ENCODE measurements at regions of chr15 and their contacts with region 1.

Region 1: GRCh38 chr15:70036585-70037291 is 61.0 kb downstream of the TLE3 start:
- DNase-seq: peak; percentile 75
- ATAC-seq: peak; percentile 69
- H3K4me3 ChIP-seq: peak overlapping the region in 2 of 5 experiments; percentile 11 to 13
- H3K4me3 Mint-ChIP-seq: peak overlapping the region; percentile 75
- H3K27ac ChIP-seq: peak overlapping the region; percentile 70 to 78
- H3K27ac Mint-ChIP-seq: peak overlapping the region; percentile 91
- H3K4me1 ChIP-seq: peaks cover 39 to 48% of the 10 kb centered on the region in 2 donors
- H3K4me1 Mint-ChIP-seq: peaks cover 59% of the 10 kb centered on the region
- H3K27me3 ChIP-seq: no peaks in the 10 kb centered on the region
- H3K27me3 Mint-ChIP-seq: no peaks in the 10 kb centered on the region
- CTCF ChIP-seq: no peak

Region 2: GRCh38 chr15:69755551-69756310 is 281.0 kb before region 1 on chr15:
- CTCF ChIA-PET with region 1: interaction called, 7 read pairs
- POLR2A ChIA-PET with region 1: no interaction called
- intact Hi-C with region 1: loop called (anchors 1 kb)
- DNase-seq: peak; percentile 84
- ATAC-seq: peak; percentile 85
- H3K4me3 ChIP-seq: peak overlapping the region in 2 of 5 experiments; percentile 8 to 23
- H3K4me3 Mint-ChIP-seq: peak overlapping the region; percentile 84
- H3K27ac ChIP-seq: peak overlapping the region; percentile 22 to 73
- H3K27ac Mint-ChIP-seq: peak overlapping the region; percentile 91
- H3K4me1 ChIP-seq: peaks cover 69 to 72% of the 10 kb centered on the region in 2 donors
- H3K4me1 Mint-ChIP-seq: peaks cover 79% of the 10 kb centered on the region
- H3K27me3 ChIP-seq: no peaks in the 10 kb centered on the region
- H3K27me3 Mint-ChIP-seq: no peaks in the 10 kb centered on the region
- CTCF ChIP-seq: no peak

Region 3: DNA sequence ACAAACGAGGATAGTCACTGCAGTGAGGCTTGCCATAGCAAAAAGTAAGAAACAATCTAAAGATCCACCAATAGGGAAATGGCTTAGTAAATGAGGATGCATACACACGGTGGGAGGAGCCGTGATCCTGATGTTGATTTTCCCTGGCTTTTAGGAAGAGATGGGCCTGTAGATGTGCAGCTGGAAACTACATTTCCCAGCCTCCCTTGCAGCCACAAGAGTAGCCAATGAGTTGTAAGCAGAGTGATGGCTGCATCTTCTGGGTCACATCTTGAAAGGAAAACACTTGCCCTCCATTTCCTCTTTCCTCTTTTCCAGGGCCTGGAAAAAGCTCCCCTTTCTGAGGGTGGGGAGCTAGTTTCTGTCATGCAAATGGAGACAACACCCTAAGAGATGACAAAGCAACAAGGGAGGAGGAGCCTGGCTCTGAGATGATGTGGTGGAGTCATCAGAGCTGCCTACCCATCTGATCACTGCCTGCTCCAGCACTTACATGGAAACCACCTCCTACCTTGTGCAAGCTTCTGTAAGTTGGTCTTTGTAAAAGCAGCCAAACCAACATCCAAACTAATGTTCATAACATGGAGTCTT is 78.1 kb before region 1 on chr15:
- CTCF ChIA-PET with region 1: no interaction called
- POLR2A ChIA-PET with region 1: no interaction called
- intact Hi-C with region 1: loop called (anchors 5 kb)
- DNase-seq: no peak
- ATAC-seq: no peak
- H3K4me3 ChIP-seq: no peak overlapping the region
- H3K4me3 Mint-ChIP-seq: no peak overlapping the region
- H3K27ac ChIP-seq: no peak overlapping the region
- H3K27ac Mint-ChIP-seq: no peak overlapping the region
- H3K4me1 ChIP-seq: peaks cover 0 to 9% of the 10 kb centered on the region in 2 donors
- H3K4me1 Mint-ChIP-seq: peaks cover 14% of the 10 kb centered on the region
- H3K27me3 ChIP-seq: peaks cover 0 to 7% (median 0%) of the 10 kb centered on the region in 4 experiments
- H3K27me3 Mint-ChIP-seq: peaks cover 8% of the 10 kb centered on the region
- CTCF ChIP-seq: no peak

Region 4: DNA sequence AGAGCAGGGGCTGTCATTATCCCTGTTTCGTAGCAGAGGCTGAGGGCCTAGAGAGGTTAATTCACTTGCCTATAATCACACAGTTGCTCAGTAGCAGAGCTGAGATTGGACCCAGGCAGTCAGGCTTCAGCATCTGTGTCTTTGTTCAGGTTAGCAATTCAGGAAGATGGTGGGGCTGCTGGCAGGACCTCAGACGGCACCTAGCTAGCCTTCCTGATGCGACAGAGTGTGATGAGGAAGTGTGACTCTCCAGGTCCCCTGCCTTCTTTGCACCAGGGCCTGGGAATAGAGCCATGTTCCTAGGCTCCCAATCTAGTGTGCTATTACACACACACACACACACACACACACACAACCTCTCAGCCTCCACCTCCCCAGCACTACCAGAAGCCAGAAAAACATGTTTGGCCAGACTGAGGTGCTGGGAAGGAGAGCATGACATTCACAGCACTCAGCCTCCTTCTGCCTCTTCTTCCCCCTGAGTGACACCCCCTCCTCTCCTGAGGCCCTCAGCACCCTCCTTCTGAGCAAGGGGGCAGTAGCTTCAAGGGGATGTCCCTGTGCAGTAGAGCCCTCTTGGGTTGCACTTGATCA is 27.9 kb before region 1 on chr15:
- CTCF ChIA-PET with region 1: interaction called, 6 read pairs
- POLR2A ChIA-PET with region 1: interaction called, 10 read pairs
- intact Hi-C with region 1: no loop called
- DNase-seq: peak; percentile 35
- ATAC-seq: peak; percentile 33
- H3K4me3 ChIP-seq: no peak overlapping the region
- H3K4me3 Mint-ChIP-seq: no peak overlapping the region
- H3K27ac ChIP-seq: no peak overlapping the region
- H3K27ac Mint-ChIP-seq: peak overlapping the region; percentile 70
- H3K4me1 ChIP-seq: peaks cover 17 to 28% of the 10 kb centered on the region in 2 donors
- H3K4me1 Mint-ChIP-seq: peaks cover 43% of the 10 kb centered on the region
- H3K27me3 ChIP-seq: no peaks in the 10 kb centered on the region
- H3K27me3 Mint-ChIP-seq: no peaks in the 10 kb centered on the region
- CTCF ChIP-seq: no peak

Region 5: DNA sequence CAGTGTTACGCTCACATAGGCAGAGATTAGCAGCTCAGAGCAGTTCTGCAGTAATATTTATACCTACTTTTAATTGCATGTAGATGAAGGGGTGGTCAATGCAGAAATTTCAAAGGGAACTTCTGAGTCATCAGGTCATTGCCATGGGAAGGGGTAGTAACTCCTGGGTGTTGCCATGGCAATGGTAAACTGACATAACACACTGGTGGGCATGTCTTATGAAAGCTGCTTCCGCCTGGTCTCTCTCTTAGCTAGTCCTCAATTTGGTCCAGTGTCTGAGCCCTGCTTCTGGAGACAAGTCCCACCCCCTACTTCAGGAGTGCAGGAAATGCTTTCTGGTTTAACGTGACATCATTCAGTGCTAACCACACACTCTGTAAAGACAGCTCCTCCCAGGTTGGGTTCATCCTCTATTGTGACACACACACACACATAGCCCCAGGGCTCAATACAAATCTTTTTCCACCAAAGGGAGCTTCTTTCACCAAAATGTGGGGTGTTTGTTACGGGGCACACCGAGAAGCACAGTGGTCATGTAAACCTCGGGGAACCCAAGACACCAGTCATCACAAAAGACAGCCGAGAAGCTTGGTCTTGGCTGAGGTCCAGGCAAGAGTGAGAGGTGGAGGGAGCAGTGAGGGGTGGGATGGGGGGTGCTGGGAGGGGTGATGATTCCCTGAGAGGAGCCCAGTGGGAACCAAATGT is 13.5 kb before region 1 on chr15:
- CTCF ChIA-PET with region 1: interaction called, 16 read pairs
- POLR2A ChIA-PET with region 1: interaction called, 15 read pairs
- intact Hi-C with region 1: loop called (anchors 1 kb)
- DNase-seq: peak; percentile 75
- ATAC-seq: peak; percentile 83
- H3K4me3 ChIP-seq: no peak overlapping the region
- H3K4me3 Mint-ChIP-seq: peak overlapping the region; percentile 76
- H3K27ac ChIP-seq: peak overlapping the region; percentile 20 to 48
- H3K27ac Mint-ChIP-seq: peak overlapping the region; percentile 94
- H3K4me1 ChIP-seq: peaks cover 42 to 59% of the 10 kb centered on the region in 2 donors
- H3K4me1 Mint-ChIP-seq: peaks cover 51% of the 10 kb centered on the region
- H3K27me3 ChIP-seq: peaks cover 0 to 5% (median 0%) of the 10 kb centered on the region in 4 experiments
- H3K27me3 Mint-ChIP-seq: peaks cover 3% of the 10 kb centered on the region
- CTCF ChIP-seq: no peak

Region 6: GRCh38 chr15:70289203-70289955 is 252.6 kb after region 1 on chr15:
- CTCF ChIA-PET with region 1: no interaction called
- POLR2A ChIA-PET with region 1: no interaction called
- intact Hi-C with region 1: no loop called
- DNase-seq: no peak
- ATAC-seq: no peak
- H3K4me3 ChIP-seq: no peak overlapping the region
- H3K4me3 Mint-ChIP-seq: no peak overlapping the region
- H3K27ac ChIP-seq: no peak overlapping the region
- H3K27ac Mint-ChIP-seq: no peak overlapping the region
- H3K4me1 ChIP-seq: peaks cover 12 to 16% of the 10 kb centered on the region in 2 donors
- H3K4me1 Mint-ChIP-seq: peaks cover 25% of the 10 kb centered on the region
- H3K27me3 ChIP-seq: no peaks in the 10 kb centered on the region
- H3K27me3 Mint-ChIP-seq: no peaks in the 10 kb centered on the region
- CTCF ChIP-seq: no peak

Measured in B cell (primary cell).